Activated CD4-positive, alpha-beta T cell treated with anti-CD3 and anti-CD28 coated beads for 36 hours (primary cell): ENCODE measurements at regions of chrX and their contacts with region 1.

Region 1: GRCh38 chrX:133939655-133940302 is 45.6 kb downstream of the GPC3 start:
- DNase-seq: no peak
- ATAC-seq: no peak
- H3K4me3 Mint-ChIP-seq: no peak overlapping the region
- H3K27ac Mint-ChIP-seq: no peak overlapping the region
- H3K4me1 Mint-ChIP-seq: no peaks in the 10 kb centered on the region
- H3K27me3 Mint-ChIP-seq: no peaks in the 10 kb centered on the region

Region 2: DNA sequence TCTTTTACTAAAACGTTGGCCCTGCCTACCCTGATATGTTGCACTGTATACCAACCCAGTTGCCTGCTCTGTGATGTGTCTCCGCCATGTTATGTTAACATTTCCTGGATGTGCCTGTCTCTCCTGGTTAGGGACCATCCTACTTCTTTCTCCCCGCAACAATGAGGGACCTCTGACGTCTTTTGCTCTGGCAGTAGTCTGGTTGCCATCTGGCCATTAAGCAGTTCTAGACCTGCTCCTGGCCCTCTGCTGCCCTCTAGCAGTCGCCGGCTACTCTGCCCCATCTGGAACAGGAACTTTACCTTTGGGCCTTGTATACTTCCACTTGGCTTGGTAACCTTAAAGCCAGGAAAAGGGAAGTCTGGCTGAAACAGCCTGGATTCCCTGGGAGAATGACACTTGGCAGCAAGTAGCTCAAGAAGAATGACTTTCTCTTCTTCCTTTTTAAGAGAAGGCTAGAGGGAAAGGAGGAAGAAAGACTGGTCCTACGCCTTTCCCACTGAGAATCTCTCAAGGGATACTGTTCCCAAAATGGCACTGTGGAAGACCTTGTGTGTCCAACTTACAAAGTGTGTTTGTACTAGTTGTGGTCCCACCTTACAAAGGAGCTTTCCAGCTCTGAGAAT is 17.9 kb before region 1 on chrX:
- CTCF ChIA-PET with region 1: no interaction called
- POLR2A ChIA-PET with region 1: no interaction called
- intact Hi-C with region 1: no loop called
- DNase-seq: peak; percentile 62
- ATAC-seq: peak; percentile 56
- H3K4me3 Mint-ChIP-seq: no peak overlapping the region
- H3K27ac Mint-ChIP-seq: no peak overlapping the region
- H3K4me1 Mint-ChIP-seq: peaks cover 18% of the 10 kb centered on the region
- H3K27me3 Mint-ChIP-seq: no peaks in the 10 kb centered on the region

Region 3: DNA sequence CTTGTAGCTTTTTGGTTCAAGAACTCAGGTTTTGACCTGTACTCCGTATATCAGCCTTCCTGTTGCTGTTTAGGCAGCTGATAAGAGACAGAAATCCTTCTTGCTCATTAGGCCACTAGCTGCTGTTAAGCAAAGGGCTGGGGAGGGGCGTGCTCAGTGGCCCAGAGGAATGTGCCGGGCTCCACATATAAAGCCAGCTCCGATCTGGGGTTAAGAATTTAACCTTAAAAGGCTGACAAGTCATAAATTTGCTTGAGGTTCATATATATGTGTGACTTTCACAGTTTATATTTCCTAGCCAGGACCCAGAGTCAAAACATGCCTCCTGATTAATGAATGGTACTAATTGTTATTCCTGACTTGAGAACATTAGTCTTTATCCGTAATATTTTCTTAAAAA is 30.3 kb after region 1 on chrX:
- CTCF ChIA-PET with region 1: no interaction called
- POLR2A ChIA-PET with region 1: no interaction called
- intact Hi-C with region 1: no loop called
- DNase-seq: no peak
- ATAC-seq: no peak
- H3K4me3 Mint-ChIP-seq: no peak overlapping the region
- H3K27ac Mint-ChIP-seq: no peak overlapping the region
- H3K4me1 Mint-ChIP-seq: peaks cover 3% of the 10 kb centered on the region
- H3K27me3 Mint-ChIP-seq: no peaks in the 10 kb centered on the region

Region 4: DNA sequence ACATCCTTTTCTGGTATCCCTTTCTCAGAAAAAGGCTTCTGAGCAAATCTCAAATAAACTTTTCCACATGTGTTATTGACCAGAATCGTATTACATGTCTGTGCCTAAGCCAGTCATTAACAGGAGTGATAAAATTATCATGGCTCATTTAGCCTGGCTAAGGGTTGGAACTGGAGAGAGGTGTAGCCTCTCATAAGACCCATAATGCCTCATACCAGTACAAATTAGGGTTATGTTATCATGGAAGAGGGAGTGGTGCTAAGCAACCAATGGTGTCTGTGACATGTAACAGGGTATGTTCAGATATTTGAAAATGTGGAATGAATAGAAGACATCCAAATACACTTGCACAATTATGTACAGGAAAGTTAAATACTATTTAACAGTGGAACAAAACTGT is 197.6 kb after region 1 on chrX:
- CTCF ChIA-PET with region 1: no interaction called
- POLR2A ChIA-PET with region 1: no interaction called
- intact Hi-C with region 1: loop called in 1 of 2 experiments (anchors 10 kb)
- DNase-seq: no peak
- ATAC-seq: no peak
- H3K4me3 Mint-ChIP-seq: no peak overlapping the region
- H3K27ac Mint-ChIP-seq: no peak overlapping the region
- H3K4me1 Mint-ChIP-seq: no peaks in the 10 kb centered on the region
- H3K27me3 Mint-ChIP-seq: peaks cover 2% of the 10 kb centered on the region